ENCODE measurements at regions of chr17 and their contacts with region 1.

Region 1: GRCh38 chr17:10836966-10837590 is 809 bp downstream of the PIRT start:
- DNase-seq: peak in 3 of 6 donors; percentile 32 to 47 (median 43)
- ATAC-seq: peak; percentile 69 to 88 (median 81)
- H3K4me3 ChIP-seq: no peak overlapping the region
- H3K27ac ChIP-seq: no peak overlapping the region
- H3K4me1 ChIP-seq: no peaks in the 10 kb centered on the region
- H3K27me3 ChIP-seq: no peaks in the 10 kb centered on the region
- CTCF ChIP-seq: no peak

Region 2: GRCh38 chr17:10737168-10737622 is 99.9 kb before region 1 on chr17:
- intact Hi-C with region 1: loop called in 1 of 3 experiments (anchors 2 kb)
- DNase-seq: peak in 5 of 6 donors; percentile 56 to 80 (median 77)
- ATAC-seq: peak; percentile 96 to 98 (median 97)
- H3K4me3 ChIP-seq: no peak overlapping the region
- H3K27ac ChIP-seq: peak overlapping the region in 3 of 4 donors; percentile 7 to 74 (median 54)
- H3K4me1 ChIP-seq: peaks cover 0 to 11% (median 4%) of the 10 kb centered on the region in 3 donors
- H3K27me3 ChIP-seq: no peaks in the 10 kb centered on the region
- CTCF ChIP-seq: peak; percentile 63 to 69 (median 66)

Region 3: DNA sequence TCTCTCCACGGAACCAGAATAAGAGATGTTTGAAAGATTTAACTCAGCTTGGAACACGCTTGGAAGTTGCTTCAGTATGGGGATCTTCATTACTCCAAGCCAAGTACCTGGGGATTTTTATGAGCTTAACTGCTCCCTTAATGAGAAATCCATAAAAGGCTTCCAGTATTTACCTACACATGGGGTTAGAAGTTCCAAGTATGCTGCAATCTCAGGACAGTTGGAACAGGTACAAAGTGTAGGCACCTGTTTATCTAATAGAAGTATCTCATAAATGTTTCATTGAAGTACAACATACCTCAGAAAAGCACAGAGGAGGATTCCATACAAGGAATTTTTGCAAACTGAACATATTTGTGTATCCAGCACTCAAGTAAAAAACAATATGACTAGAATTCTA is 162.4 kb after region 1 on chr17:
- intact Hi-C with region 1: no loop called
- DNase-seq: no peak
- ATAC-seq: no peak
- H3K4me3 ChIP-seq: no peak overlapping the region
- H3K27ac ChIP-seq: no peak overlapping the region
- H3K4me1 ChIP-seq: no peaks in the 10 kb centered on the region
- H3K27me3 ChIP-seq: no peaks in the 10 kb centered on the region
- CTCF ChIP-seq: no peak